ENCODE measurements at regions of chr18 and their contacts with region 1.

Region 1: GRCh38 chr18:58911766-58912165 is 47.1 kb downstream of the ZNF532 start:
- DNase-seq: peak in 1 of 2 experiments; percentile 46
- H3K4me3 ChIP-seq: peak overlapping the region in 1 of 4 experiments; percentile 16; a peak in 1 of 8 replicates
- H3K27ac ChIP-seq: peak overlapping the region; percentile 53; the same call in 1 of the 2 replicates
- H3K4me1 ChIP-seq: peaks cover 7 to 42% (median 40%) of the 10 kb centered on the region in 4 experiments
- H3K27me3 ChIP-seq: no peaks in the 10 kb centered on the region
- CTCF ChIP-seq: no peak
- EP300 ChIP-seq: no peak
- POLR2A ChIP-seq: no peak
- RAD21 ChIP-seq: no peak

Region 2: DNA sequence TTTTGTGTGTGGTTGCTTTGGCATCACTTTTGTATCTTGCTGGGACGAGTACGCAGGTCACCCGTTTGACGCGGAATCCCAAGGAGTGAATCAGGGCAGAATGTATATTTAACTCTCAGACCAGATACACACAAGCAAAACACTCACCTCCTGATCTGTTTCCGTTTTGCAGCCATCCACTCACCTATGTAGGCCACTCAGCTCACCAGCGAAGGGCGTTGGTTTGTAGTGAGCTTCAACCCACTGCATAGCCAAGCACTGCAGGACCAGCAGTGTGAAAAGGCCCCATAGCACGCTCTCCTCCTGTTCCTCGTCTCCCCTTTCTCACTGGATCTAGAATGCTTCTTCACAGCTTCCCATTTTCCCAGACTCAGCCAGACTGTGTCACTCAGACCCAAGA is 11.2 kb after region 1 on chr18:
- CTCF ChIA-PET with region 1: interaction called, 14 read pairs
- POLR2A ChIA-PET with region 1: interaction called, 33 read pairs
- DNase-seq: peak in 1 of 2 experiments; percentile 41
- H3K4me3 ChIP-seq: no peak overlapping the region
- H3K27ac ChIP-seq: no peak overlapping the region
- H3K4me1 ChIP-seq: peaks cover 5 to 10% (median 5%) of the 10 kb centered on the region in 4 experiments
- H3K27me3 ChIP-seq: no peaks in the 10 kb centered on the region
- CTCF ChIP-seq: no peak
- EP300 ChIP-seq: no peak
- POLR2A ChIP-seq: no peak
- RAD21 ChIP-seq: no peak

Measured in H1 (cell line).